ENCODE measurements at regions of chr11 and their contacts with region 1.

Region 1: DNA sequence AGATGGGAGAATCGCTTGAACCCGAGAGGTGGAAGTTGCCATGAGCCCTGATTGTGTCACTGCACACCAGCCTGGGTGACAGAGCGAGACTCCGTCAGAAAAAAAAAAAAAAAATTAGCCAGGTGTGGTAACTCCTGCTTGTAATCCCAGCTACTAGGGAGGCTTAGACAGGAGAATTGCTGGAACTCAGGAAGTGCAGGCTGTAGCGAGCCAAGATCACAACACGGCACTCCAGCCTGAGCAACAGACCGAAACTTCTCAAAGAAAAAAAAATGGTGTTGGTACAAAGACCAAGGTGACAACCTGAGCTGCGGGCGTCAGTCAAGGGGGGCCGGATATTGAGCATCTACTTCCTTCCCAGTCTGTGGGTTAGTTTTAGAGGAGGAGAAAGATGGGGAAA is 48.4 kb upstream of the HSPA8 start:
- DNase-seq: no peak
- H3K4me3 ChIP-seq: no peak overlapping the region
- H3K4me3 Mint-ChIP-seq: no peak overlapping the region
- H3K27ac ChIP-seq: no peak overlapping the region
- H3K27ac Mint-ChIP-seq: no peak overlapping the region
- H3K4me1 ChIP-seq: no peaks in the 10 kb centered on the region
- H3K4me1 Mint-ChIP-seq: peaks cover 1% of the 10 kb centered on the region
- H3K27me3 ChIP-seq: no peaks in the 10 kb centered on the region
- H3K27me3 Mint-ChIP-seq: peaks cover 4 to 9% (median 5%) of the 10 kb centered on the region in 3 donors
- CTCF ChIP-seq: no peak

Region 2: GRCh38 chr11:122954455-122954854 is 155.9 kb before region 1 on chr11:
- intact Hi-C with region 1: no loop called
- DNase-seq: no peak
- H3K4me3 ChIP-seq: no peak overlapping the region
- H3K4me3 Mint-ChIP-seq: no peak overlapping the region
- H3K27ac ChIP-seq: no peak overlapping the region
- H3K27ac Mint-ChIP-seq: peak overlapping the region in 1 of 7 donors; percentile 75
- H3K4me1 ChIP-seq: no peaks in the 10 kb centered on the region
- H3K4me1 Mint-ChIP-seq: peaks cover 8% of the 10 kb centered on the region
- H3K27me3 ChIP-seq: no peaks in the 10 kb centered on the region
- H3K27me3 Mint-ChIP-seq: peaks cover 1 to 4% (median 3%) of the 10 kb centered on the region in 3 donors
- CTCF ChIP-seq: no peak

Region 3: GRCh38 chr11:123251657-123252344 is 141.4 kb after region 1 on chr11:
- intact Hi-C with region 1: loop called (anchors 2 kb)
- DNase-seq: no peak
- H3K4me3 ChIP-seq: no peak overlapping the region
- H3K4me3 Mint-ChIP-seq: no peak overlapping the region
- H3K27ac ChIP-seq: no peak overlapping the region
- H3K27ac Mint-ChIP-seq: no peak overlapping the region
- H3K4me1 ChIP-seq: no peaks in the 10 kb centered on the region
- H3K4me1 Mint-ChIP-seq: peaks cover 6% of the 10 kb centered on the region
- H3K27me3 ChIP-seq: no peaks in the 10 kb centered on the region
- H3K27me3 Mint-ChIP-seq: peaks cover 8 to 16% (median 8%) of the 10 kb centered on the region in 3 donors
- CTCF ChIP-seq: no peak

Measured in CD14-positive monocyte (primary cell).